CD8-positive, alpha-beta T cell (primary cell): ENCODE measurements at regions of chr9 and their contacts with region 1.

Region 1: DNA sequence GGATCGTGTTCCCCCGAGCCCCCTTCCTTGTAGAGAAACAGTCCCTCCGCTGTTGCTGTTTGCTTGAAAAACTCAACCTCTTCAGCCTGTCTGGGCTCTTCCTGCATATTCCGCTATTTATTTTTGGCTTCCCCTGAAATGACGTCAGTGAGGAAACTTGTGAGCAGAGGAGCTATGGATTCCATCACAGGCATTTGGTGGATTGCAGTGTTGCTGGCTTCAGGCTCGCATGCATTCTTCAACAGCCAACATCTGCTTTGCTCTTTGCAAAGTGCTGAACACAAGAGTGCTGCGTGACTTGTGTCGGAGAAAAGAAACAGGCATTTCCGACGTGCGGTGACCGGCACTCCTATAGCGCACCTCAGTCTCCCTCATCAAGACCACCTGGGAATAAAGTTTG is 232.7 kb downstream of the RFK start:
- DNase-seq: no peak
- ATAC-seq: no peak
- H3K4me3 ChIP-seq: no peak overlapping the region
- H3K4me3 Mint-ChIP-seq: no peak overlapping the region
- H3K27ac ChIP-seq: no peak overlapping the region
- H3K27ac Mint-ChIP-seq: no peak overlapping the region
- H3K4me1 ChIP-seq: no peaks in the 10 kb centered on the region
- H3K4me1 Mint-ChIP-seq: peaks cover 4% of the 10 kb centered on the region
- H3K27me3 ChIP-seq: no peaks in the 10 kb centered on the region
- H3K27me3 Mint-ChIP-seq: no peaks in the 10 kb centered on the region
- CTCF ChIP-seq: no peak

Region 2: GRCh38 chr9:75979146-75979761 is 182.3 kb before region 1 on chr9:
- CTCF ChIA-PET with region 1: no interaction called
- POLR2A ChIA-PET with region 1: no interaction called
- intact Hi-C with region 1: no loop called
- DNase-seq: peak in 1 of 9 experiments; percentile 4
- ATAC-seq: no peak
- H3K4me3 ChIP-seq: no peak overlapping the region
- H3K4me3 Mint-ChIP-seq: no peak overlapping the region
- H3K27ac ChIP-seq: no peak overlapping the region
- H3K27ac Mint-ChIP-seq: no peak overlapping the region
- H3K4me1 ChIP-seq: peaks cover 7% of the 10 kb centered on the region
- H3K4me1 Mint-ChIP-seq: peaks cover 45% of the 10 kb centered on the region
- H3K27me3 ChIP-seq: no peaks in the 10 kb centered on the region
- H3K27me3 Mint-ChIP-seq: no peaks in the 10 kb centered on the region
- CTCF ChIP-seq: no peak

Region 3: GRCh38 chr9:76082057-76082456 is 79.5 kb before region 1 on chr9:
- CTCF ChIA-PET with region 1: no interaction called
- POLR2A ChIA-PET with region 1: no interaction called
- intact Hi-C with region 1: no loop called
- DNase-seq: no peak
- ATAC-seq: no peak
- H3K4me3 ChIP-seq: no peak overlapping the region
- H3K4me3 Mint-ChIP-seq: no peak overlapping the region
- H3K27ac ChIP-seq: no peak overlapping the region
- H3K27ac Mint-ChIP-seq: no peak overlapping the region
- H3K4me1 ChIP-seq: no peaks in the 10 kb centered on the region
- H3K4me1 Mint-ChIP-seq: peaks cover 3% of the 10 kb centered on the region
- H3K27me3 ChIP-seq: no peaks in the 10 kb centered on the region
- H3K27me3 Mint-ChIP-seq: no peaks in the 10 kb centered on the region
- CTCF ChIP-seq: no peak

Region 4: DNA sequence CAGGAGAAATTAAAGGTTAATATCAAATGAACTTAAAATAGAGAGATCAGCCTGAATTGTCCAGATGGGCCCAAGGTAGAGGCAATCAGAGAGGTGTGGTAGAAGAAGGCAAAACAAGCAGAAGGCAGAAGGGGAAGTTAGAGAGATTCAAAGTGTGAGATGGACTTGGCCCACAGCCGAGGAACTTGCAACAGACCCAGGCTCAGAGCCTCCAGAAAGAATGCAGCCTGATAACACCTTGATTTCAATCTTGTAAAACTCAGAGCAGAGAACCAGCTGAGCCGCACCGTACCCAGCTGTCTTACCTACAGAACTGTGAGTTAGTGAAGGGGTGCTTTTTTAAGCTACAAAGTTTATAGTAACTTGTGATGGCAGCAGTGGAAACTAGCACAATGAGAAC is 41.8 kb after region 1 on chr9:
- CTCF ChIA-PET with region 1: no interaction called
- POLR2A ChIA-PET with region 1: no interaction called
- intact Hi-C with region 1: loop called in 1 of 2 experiments (anchors 1 kb)
- DNase-seq: no peak
- ATAC-seq: no peak
- H3K4me3 ChIP-seq: no peak overlapping the region
- H3K4me3 Mint-ChIP-seq: no peak overlapping the region
- H3K27ac ChIP-seq: no peak overlapping the region
- H3K27ac Mint-ChIP-seq: no peak overlapping the region
- H3K4me1 ChIP-seq: no peaks in the 10 kb centered on the region
- H3K4me1 Mint-ChIP-seq: no peaks in the 10 kb centered on the region
- H3K27me3 ChIP-seq: no peaks in the 10 kb centered on the region
- H3K27me3 Mint-ChIP-seq: no peaks in the 10 kb centered on the region
- CTCF ChIP-seq: no peak